PC-9 (cell line): ENCODE measurements at regions of chr5 and their contacts with region 1.

Region 1: DNA sequence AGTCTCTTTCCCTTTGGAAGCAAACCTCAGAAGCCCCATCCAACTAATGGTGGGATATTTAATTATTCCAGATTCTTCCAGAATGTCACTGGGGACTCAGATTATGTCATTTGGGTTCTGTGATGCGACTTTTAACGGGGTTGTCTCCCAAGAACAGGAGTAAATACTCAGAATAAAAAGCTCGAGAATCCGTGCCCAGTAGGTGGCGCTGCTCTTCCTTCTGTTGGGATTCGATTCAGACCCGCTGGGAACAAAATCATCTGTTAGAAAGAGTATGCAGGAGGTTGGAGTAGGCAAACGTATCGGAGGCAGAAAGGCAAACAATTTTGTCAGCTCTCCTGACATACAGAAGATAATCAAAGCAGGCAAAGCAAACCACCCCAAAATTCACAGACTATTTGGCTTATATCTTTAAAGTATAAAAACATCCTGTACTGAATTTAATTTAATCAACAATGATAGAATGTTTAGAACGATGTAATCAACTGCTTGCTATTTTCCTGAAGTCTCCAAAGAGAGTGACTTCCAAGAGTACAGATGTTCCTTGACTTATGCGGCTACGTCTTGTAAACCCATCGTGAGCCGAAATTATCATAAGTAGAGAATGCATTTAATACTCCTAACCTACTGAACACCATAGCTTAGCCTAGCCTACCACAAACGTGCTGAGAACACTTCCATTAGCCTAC is 169.8 kb upstream of the RAI14 start:
- DNase-seq: peak; percentile 78 to 89
- H3K4me3 ChIP-seq: no peak overlapping the region
- H3K27ac ChIP-seq: peak overlapping the region; percentile 95
- H3K4me1 ChIP-seq: peaks cover 46% of the 10 kb centered on the region
- H3K27me3 ChIP-seq: no peaks in the 10 kb centered on the region
- CTCF ChIP-seq: peak; percentile 99

Region 2: GRCh38 chr5:34587355-34588241 is 101.3 kb after region 1 on chr5:
- CTCF ChIA-PET with region 1: interaction called, 4 read pairs
- POLR2A ChIA-PET with region 1: interaction called, 18 read pairs
- intact Hi-C with region 1: loop called (anchors 1 kb)
- DNase-seq: peak in 1 of 2 experiments; percentile 86
- H3K4me3 ChIP-seq: peak overlapping the region; percentile 51
- H3K27ac ChIP-seq: peak overlapping the region; percentile 97
- H3K4me1 ChIP-seq: peaks cover 76% of the 10 kb centered on the region
- H3K27me3 ChIP-seq: no peaks in the 10 kb centered on the region
- CTCF ChIP-seq: no peak

Region 3: DNA sequence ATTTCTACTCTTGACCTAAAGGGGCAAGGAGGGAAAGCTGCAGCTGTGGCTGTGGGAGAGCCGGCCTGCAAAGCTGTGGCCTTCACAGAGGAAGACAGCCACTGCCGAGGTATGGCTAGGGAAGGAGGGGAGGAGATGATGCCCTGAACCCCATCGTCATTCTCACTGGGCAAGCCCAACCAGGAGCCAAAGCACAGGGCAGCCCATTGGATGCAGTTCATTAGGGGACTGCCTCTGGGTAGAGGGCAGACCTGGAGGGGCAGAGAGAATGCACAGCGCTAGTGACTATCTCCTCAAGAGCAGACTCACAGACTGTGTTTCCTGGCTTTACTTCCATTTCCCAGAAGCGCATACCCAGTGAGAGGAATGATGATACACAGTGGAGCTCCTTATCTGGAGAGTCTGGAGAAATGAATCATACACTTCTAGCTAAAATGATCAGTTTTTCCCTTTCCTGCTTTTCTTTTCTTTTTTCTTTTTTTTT is 305.5 kb after region 1 on chr5:
- CTCF ChIA-PET with region 1: no interaction called
- POLR2A ChIA-PET with region 1: no interaction called
- intact Hi-C with region 1: loop called (anchors 5 kb)
- DNase-seq: no peak
- H3K4me3 ChIP-seq: no peak overlapping the region
- H3K27ac ChIP-seq: no peak overlapping the region
- H3K4me1 ChIP-seq: no peaks in the 10 kb centered on the region
- H3K27me3 ChIP-seq: no peaks in the 10 kb centered on the region
- CTCF ChIP-seq: no peak

Region 4: GRCh38 chr5:34838785-34839714 is 352.7 kb after region 1 on chr5 and contains the start of gene TTC23L:
- CTCF ChIA-PET with region 1: no interaction called
- POLR2A ChIA-PET with region 1: no interaction called
- intact Hi-C with region 1: loop called (anchors 1 kb)
- DNase-seq: peak; percentile 86 to 98
- H3K4me3 ChIP-seq: peak within 1 kb of the TSS; percentile 68
- H3K27ac ChIP-seq: peak within 1 kb of the TSS; percentile 21; the same call in 1 of the 2 replicates
- H3K4me1 ChIP-seq: peaks cover 6% of the 10 kb centered on the region
- H3K27me3 ChIP-seq: no peaks in the 10 kb centered on the region
- CTCF ChIP-seq: no peak
- total RNA-seq, gene TTC23L: 3.9 and 7.1 TPM in 2 replicates

Region 5: DNA sequence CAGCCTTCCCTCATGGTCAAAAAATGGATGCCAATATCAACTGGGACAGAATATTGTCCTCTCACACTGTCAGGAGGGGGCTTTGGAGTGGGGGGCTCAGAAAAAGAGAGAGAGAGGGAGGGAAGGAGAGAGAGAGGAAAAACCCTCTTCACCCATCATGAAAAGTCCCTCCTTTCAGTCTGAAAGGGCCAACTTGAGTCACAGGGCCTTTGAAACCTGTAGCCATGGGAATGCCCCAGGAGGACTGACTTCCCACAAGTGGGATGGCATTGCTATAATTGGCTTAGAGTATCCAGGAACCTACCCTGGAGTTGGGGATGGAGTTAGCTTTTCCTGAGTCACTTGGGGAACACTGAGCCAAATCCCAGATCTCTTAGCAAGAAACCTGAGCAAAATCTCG is 484.2 kb after region 1 on chr5:
- CTCF ChIA-PET with region 1: no interaction called
- POLR2A ChIA-PET with region 1: interaction called, 10 read pairs
- intact Hi-C with region 1: no loop called
- DNase-seq: no peak
- H3K4me3 ChIP-seq: no peak overlapping the region
- H3K27ac ChIP-seq: no peak overlapping the region
- H3K4me1 ChIP-seq: no peaks in the 10 kb centered on the region
- H3K27me3 ChIP-seq: peaks cover 4% of the 10 kb centered on the region; the same call in 1 of the 2 replicates
- CTCF ChIP-seq: no peak